Activated CD4-positive, alpha-beta T cell treated with anti-CD3 and anti-CD28 coated beads, Interleukin-2, amount 10 ng/mL, durations not matched to agents 24 days and 14 days (primary cell): ENCODE measurements at regions of chr1 and their contacts with region 1.

Region 1: GRCh38 chr1:198620951-198621824 is 17.7 kb upstream of the PTPRC start:
- DNase-seq: peak; percentile 92
- H3K4me3 Mint-ChIP-seq: peak overlapping the region; percentile 85
- H3K27ac Mint-ChIP-seq: peak overlapping the region; percentile 99
- H3K4me1 Mint-ChIP-seq: peaks cover 64% of the 10 kb centered on the region
- H3K27me3 Mint-ChIP-seq: no peaks in the 10 kb centered on the region

Region 2: DNA sequence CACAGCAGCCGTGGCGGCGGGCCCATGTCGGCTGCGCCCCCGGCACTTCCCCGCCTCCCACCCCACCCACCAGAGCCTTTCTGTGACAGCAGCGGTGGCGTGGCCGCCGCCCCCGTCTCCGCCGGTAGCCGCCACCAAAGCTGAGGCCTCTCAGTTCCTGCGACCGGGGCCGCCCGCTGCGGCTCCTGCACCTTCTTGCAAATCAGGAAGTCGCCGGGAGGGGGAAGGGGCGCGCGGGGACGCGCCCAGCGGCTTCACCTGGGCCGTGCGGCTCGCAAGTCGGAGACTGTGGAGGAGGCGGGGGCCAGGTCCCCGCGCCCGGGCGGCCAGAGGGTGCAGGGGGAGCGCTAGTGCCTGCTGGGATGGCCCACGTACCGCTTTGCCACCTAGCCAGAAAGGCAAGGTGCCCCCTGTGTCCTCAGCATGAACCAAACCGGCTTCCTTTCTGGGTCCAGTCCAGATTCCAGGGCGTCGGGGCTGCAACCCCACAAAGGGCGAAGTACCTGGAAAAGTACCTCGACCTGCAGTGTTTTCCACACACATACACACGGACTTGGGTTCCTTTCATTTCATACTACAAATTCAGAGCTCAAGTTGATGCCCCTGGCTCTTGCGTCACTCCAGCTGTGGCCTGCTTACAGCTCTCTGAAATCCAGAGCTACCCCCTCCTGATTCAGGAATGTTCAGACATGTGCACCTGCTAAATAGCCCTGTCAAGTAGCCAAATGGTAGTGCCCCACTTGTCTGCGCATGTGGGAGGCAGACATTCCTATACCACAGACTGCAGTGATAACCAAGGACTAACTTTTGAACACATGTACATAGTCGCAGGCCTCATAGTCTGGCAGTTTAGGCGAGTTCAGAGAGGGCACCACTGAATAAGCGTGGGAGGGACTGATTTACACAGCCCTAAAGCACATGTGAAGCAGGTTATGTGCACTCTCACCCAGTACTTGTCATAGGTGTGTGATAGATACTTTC is 845.6 kb before region 1 on chr1 and contains the start of gene DENND1B:
- intact Hi-C with region 1: loop called (anchors 10 kb)
- DNase-seq: peak; percentile 95
- H3K4me3 Mint-ChIP-seq: peak within 1 kb of the TSS; percentile 89
- H3K27ac Mint-ChIP-seq: peak within 1 kb of the TSS; percentile 99
- H3K4me1 Mint-ChIP-seq: peaks cover 61% of the 10 kb centered on the region
- H3K27me3 Mint-ChIP-seq: no peaks in the 10 kb centered on the region
- total RNA-seq, gene DENND1B: 15.0 and 16.8 TPM in 2 replicates

Region 3: DNA sequence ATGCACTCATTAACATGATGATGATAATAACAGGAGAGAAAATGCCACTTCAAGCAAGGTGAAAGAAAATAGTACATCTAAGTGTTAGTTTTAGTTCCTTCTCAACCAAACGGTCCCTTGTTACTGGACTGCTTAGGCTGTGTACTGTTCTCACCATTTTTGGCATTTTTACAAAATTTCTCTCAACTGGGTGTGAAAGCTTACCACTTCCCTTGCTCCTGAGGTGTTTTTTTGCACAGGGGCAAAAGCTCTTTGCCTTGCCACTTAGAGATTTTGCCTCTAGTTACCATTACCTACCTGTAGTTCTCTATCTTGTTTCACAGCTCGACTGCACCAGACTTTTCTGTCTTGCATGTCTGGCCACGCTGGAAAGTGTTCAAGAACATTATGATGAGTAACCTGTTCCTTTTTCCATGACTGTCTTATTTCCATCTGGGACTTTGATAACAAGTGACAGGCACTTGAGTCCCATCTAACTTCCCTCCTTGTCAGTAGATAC is 453.7 kb before region 1 on chr1:
- intact Hi-C with region 1: loop called (anchors 5 kb)
- DNase-seq: peak; percentile 74
- H3K4me3 Mint-ChIP-seq: peak overlapping the region; percentile 73
- H3K27ac Mint-ChIP-seq: peak overlapping the region; percentile 94
- H3K4me1 Mint-ChIP-seq: peaks cover 65% of the 10 kb centered on the region
- H3K27me3 Mint-ChIP-seq: no peaks in the 10 kb centered on the region

Region 4: DNA sequence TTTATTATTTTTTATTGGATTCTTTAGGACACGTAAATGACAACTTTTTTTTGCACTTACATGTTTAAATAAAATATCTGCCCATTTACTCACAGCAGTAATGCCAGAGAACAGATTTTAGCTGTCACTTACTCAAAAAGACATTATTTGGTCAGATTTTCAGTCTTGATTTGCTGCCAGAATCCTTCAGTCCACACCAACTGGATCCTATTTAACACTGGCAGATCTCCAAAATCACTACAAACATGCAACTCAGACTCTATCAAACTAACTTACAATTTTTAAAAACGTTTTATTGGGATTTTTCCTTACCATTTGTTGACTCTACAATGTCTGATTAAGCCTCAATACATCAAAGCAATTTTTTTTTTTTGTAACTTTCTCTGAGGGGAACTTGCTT is 91.8 kb before region 1 on chr1:
- intact Hi-C with region 1: no loop called
- DNase-seq: no peak
- H3K4me3 Mint-ChIP-seq: no peak overlapping the region
- H3K27ac Mint-ChIP-seq: no peak overlapping the region
- H3K4me1 Mint-ChIP-seq: peaks cover 23% of the 10 kb centered on the region
- H3K27me3 Mint-ChIP-seq: no peaks in the 10 kb centered on the region

Region 5: GRCh38 chr1:198638894-198639635 is 17.9 kb after region 1 on chr1 and contains the start of gene PTPRC:
- intact Hi-C with region 1: loop called (anchors 1 kb)
- DNase-seq: peak; percentile 84
- H3K4me3 Mint-ChIP-seq: peak within 1 kb of the TSS; percentile 89
- H3K27ac Mint-ChIP-seq: peak within 1 kb of the TSS; percentile 95
- H3K4me1 Mint-ChIP-seq: peaks cover 47% of the 10 kb centered on the region
- H3K27me3 Mint-ChIP-seq: no peaks in the 10 kb centered on the region
- total RNA-seq, gene PTPRC: 436 and 438 TPM in 2 replicates

Region 6: GRCh38 chr1:198880818-198881597 is 259.8 kb after region 1 on chr1:
- intact Hi-C with region 1: loop called (anchors 5 kb)
- DNase-seq: no peak
- H3K4me3 Mint-ChIP-seq: peak overlapping the region; percentile 23
- H3K27ac Mint-ChIP-seq: peak overlapping the region; percentile 86
- H3K4me1 Mint-ChIP-seq: peaks cover 34% of the 10 kb centered on the region
- H3K27me3 Mint-ChIP-seq: no peaks in the 10 kb centered on the region